HCT116 (cell line): ENCODE measurements at regions of chr20 and their contacts with region 1.

Region 1: DNA sequence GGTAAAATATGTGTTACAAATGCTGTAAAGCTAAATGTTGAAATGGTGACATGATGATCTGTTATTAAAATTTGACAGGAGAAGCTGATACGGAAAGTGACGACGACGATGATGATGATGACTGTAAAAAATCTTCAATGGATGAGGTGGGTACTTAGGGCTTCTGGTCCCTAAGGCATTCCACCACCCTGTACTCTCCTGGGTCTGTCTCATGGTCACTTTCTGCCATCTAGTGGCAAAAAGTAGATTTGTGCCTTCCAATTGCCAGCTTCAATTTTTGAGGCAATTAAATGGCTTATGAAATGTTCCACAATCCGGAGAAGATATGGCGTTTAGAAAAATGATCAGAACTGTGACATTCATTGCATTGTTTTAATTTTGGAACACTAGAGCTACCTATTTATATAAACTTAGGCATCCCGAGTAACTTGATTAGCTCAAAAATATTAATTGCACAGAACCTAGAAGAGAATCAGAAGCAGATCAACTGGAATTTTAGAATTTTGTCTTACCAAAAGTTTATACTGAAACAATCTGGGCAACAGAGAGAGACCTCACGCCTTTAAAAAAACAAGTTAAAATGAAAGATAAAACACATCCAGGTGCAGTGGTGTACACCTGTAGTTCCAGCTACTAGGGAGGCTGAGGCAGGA is 346.5 kb upstream of the PLCB4 start:
- DNase-seq: peak; percentile 59
- ATAC-seq: peak; percentile 91
- H3K4me3 ChIP-seq: no peak overlapping the region
- H3K27ac ChIP-seq: no peak overlapping the region
- H3K4me1 ChIP-seq: no peaks in the 10 kb centered on the region
- H3K27me3 ChIP-seq: no peaks in the 10 kb centered on the region
- CTCF ChIP-seq: peak; percentile 52 to 83 (median 71); a peak in 5 of 6 replicates
- POLR2A ChIP-seq: no peak
- RAD21 ChIP-seq: peak; percentile 82

Region 2: GRCh38 chr20:7935027-7935551 is 787.3 kb before region 1 on chr20:
- CTCF ChIA-PET with region 1: interaction called, 97 read pairs
- POLR2A ChIA-PET with region 1: interaction called, 3 read pairs
- RAD21 ChIA-PET with region 1: interaction called, 9 read pairs
- intact Hi-C with region 1: loop called (anchors 1 kb)
- DNase-seq: no peak
- ATAC-seq: no peak
- H3K4me3 ChIP-seq: no peak overlapping the region
- H3K27ac ChIP-seq: no peak overlapping the region
- H3K4me1 ChIP-seq: peaks cover 0 to 4% of the 10 kb centered on the region in 2 experiments; a peak in 1 of 4 replicates
- H3K27me3 ChIP-seq: no peaks in the 10 kb centered on the region
- CTCF ChIP-seq: no peak
- POLR2A ChIP-seq: no peak
- RAD21 ChIP-seq: no peak

Region 3: DNA sequence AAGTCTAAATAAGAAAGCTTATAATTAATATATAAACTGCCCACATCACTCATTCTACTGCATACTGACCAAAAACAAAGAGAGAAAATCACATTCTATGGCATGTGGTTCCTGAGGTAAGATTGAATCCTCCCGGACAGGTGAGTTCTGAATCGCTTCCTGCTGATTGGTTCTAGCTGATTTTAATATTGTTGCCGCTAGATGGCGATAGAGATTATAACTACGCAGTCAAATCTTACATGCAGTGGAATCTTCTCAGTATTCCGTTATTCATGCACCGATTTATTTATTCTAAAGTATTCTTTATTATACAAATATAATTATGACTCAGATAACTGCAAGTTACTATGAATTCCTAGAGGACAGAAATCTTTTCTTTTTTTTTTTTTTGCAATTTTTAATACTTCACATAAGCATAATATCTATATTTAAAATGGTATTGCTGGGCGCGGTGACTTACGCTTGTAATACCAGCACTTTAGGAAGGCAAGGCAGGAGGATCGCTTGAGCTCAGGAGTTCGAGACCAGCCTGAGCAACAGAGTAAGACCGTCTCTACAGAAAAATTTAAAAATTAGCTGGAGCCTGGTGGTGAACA is 678.6 kb before region 1 on chr20:
- CTCF ChIA-PET with region 1: interaction called, 66 read pairs
- POLR2A ChIA-PET with region 1: no interaction called
- RAD21 ChIA-PET with region 1: interaction called, 3 read pairs
- intact Hi-C with region 1: loop called (anchors 2 kb)
- DNase-seq: peak; percentile 60
- ATAC-seq: peak; percentile 91
- H3K4me3 ChIP-seq: no peak overlapping the region
- H3K27ac ChIP-seq: no peak overlapping the region
- H3K4me1 ChIP-seq: no peaks in the 10 kb centered on the region; a peak in 1 of 4 replicates
- H3K27me3 ChIP-seq: no peaks in the 10 kb centered on the region
- CTCF ChIP-seq: peak; percentile 46 to 61 (median 55); a peak in 5 of 6 replicates
- POLR2A ChIP-seq: no peak
- RAD21 ChIP-seq: peak; percentile 69

Region 4: DNA sequence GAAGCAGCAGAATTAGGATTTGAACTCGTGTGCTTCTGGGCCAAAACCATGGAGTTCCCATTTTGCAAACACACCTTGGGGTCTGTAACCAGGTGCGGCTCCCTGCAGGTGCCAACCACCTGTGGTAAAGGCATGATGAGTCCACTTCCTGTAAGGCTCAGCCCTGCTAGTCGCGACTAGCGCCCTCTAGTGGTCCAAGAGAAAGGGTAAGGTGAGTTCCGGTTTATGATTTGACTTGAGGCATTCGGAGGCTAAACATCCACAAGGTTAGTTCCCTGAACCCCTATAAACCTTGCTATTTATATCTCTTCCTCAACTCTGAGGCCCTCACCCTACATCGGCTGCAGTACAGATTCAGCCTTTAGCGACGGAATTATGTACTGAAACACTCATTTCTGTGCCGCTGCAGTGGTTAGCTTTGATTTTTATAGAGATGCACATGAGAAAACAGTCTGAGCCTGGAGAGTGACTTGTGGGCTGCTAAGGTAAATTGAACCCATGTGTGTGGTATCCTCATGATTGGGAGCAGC is 416.9 kb before region 1 on chr20:
- CTCF ChIA-PET with region 1: interaction called, 5 read pairs
- POLR2A ChIA-PET with region 1: no interaction called
- RAD21 ChIA-PET with region 1: no interaction called
- intact Hi-C with region 1: loop called (anchors 1 kb)
- DNase-seq: peak; percentile 67
- ATAC-seq: peak; percentile 99
- H3K4me3 ChIP-seq: no peak overlapping the region
- H3K27ac ChIP-seq: no peak overlapping the region
- H3K4me1 ChIP-seq: peaks cover 0 to 3% of the 10 kb centered on the region in 2 experiments; a peak in 1 of 4 replicates
- H3K27me3 ChIP-seq: no peaks in the 10 kb centered on the region
- CTCF ChIP-seq: peak; percentile 34 to 91 (median 88); a peak in 5 of 6 replicates
- POLR2A ChIP-seq: no peak
- RAD21 ChIP-seq: peak; percentile 52

Region 5: DNA sequence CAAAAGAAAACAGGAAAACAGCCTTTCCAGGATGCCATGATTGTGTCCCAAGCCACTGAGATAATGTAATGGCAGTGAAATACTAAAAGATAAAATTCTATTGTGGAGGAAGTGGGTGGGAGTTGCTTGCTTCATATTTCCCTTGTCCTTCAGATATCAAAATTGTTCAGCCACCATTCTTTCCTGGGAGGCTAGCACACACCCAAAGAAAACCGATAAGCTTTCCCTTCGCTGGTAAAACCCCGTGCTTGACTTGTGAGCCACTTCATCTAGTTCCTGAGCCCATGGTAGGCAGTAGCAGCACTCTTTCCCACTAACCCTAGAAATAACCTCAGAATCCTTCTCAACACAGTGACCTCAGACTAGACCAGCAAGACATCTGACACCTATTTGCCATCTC is 10.9 kb before region 1 on chr20:
- CTCF ChIA-PET with region 1: interaction called, 12 read pairs
- POLR2A ChIA-PET with region 1: no interaction called
- RAD21 ChIA-PET with region 1: no interaction called
- intact Hi-C with region 1: no loop called
- DNase-seq: no peak
- ATAC-seq: no peak
- H3K4me3 ChIP-seq: no peak overlapping the region
- H3K27ac ChIP-seq: no peak overlapping the region
- H3K4me1 ChIP-seq: no peaks in the 10 kb centered on the region
- H3K27me3 ChIP-seq: no peaks in the 10 kb centered on the region
- CTCF ChIP-seq: no peak
- POLR2A ChIP-seq: no peak
- RAD21 ChIP-seq: no peak